ENCODE measurements at regions of chr13 and their contacts with region 1.

Region 1: DNA sequence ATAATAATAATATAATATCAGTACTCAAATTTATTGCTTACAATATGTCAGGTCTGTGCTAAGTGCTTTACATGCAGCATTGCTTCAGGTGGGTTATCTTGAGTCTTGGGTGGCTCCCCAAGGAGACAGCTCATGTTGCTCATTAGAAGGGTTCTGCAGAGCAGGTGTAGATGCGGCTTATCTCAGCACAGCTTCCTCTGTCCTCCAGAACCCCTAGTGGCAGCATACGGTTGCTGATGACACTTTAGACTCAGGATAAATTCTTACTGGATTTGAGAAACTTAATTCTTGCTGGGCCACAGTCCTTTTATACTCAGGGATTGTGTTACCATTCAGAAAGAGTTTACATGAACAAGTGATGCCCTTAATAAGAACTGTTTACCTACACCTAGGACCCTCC is 8.9 kb downstream of the COG3 start:
- DNase-seq: peak; percentile 31
- ATAC-seq: peak; percentile 73
- H3K4me3 Mint-ChIP-seq: no peak overlapping the region
- H3K27ac Mint-ChIP-seq: no peak overlapping the region
- H3K4me1 Mint-ChIP-seq: peaks cover 58% of the 10 kb centered on the region
- H3K27me3 Mint-ChIP-seq: no peaks in the 10 kb centered on the region
- CTCF ChIP-seq: peak; percentile 10

Region 2: DNA sequence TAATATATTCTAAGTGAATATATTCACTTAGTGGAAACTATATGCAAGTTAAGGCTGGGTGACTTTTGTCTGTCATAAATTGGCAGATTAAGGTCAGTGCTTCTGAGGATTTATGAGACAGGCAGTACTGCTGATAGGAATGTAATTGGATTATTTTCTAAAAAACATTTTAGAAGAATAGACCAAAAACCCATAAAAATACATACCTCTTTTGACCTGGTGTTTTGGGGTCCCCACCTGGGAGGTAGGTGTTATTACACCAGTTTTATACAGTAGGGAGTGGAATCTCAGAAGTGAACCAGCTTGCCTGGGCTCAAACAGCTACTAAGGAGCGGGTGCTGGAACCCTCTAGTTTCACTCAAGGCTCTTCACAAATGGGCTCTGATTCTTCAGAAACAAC is 16.4 kb after region 1 on chr13:
- CTCF ChIA-PET with region 1: interaction called, 11 read pairs
- POLR2A ChIA-PET with region 1: interaction called, 3 read pairs
- intact Hi-C with region 1: no loop called
- DNase-seq: peak; percentile 20
- ATAC-seq: peak; percentile 79
- H3K4me3 Mint-ChIP-seq: no peak overlapping the region
- H3K27ac Mint-ChIP-seq: no peak overlapping the region
- H3K4me1 Mint-ChIP-seq: no peaks in the 10 kb centered on the region
- H3K27me3 Mint-ChIP-seq: no peaks in the 10 kb centered on the region
- CTCF ChIP-seq: peak; percentile 63